HCT116 (cell line): ENCODE measurements at regions of chr2 and their contacts with region 1.

Region 1: GRCh38 chr2:110677530-110678456 is at the start of gene BUB1:
- DNase-seq: peak; percentile 91
- ATAC-seq: peak; percentile 94
- H3K4me3 ChIP-seq: peak within 1 kb of the TSS; percentile 68 to 98
- H3K27ac ChIP-seq: peak within 1 kb of the TSS; percentile 68
- H3K4me1 ChIP-seq: peaks cover 24 to 34% of the 10 kb centered on the region in 2 experiments
- H3K27me3 ChIP-seq: no peaks in the 10 kb centered on the region
- CTCF ChIP-seq: no peak
- POLR2A ChIP-seq: peak; percentile 95
- RAD21 ChIP-seq: no peak
- total RNA-seq, gene BUB1: 80.2 TPM

Region 2: GRCh38 chr2:110732422-110733413 is 54.9 kb after region 1 on chr2 and contains the start of gene ACOXL:
- CTCF ChIA-PET with region 1: no interaction called
- POLR2A ChIA-PET with region 1: no interaction called
- RAD21 ChIA-PET with region 1: no interaction called
- intact Hi-C with region 1: loop called (anchors 5 kb)
- DNase-seq: peak; percentile 40
- ATAC-seq: peak; percentile 89
- H3K4me3 ChIP-seq: peak within 1 kb of the TSS; percentile 55 to 66
- H3K27ac ChIP-seq: peak within 1 kb of the TSS; percentile 42; the same call in 1 of the 2 replicates
- H3K4me1 ChIP-seq: peaks cover 10 to 28% of the 10 kb centered on the region in 2 experiments; a peak in 2 of 4 replicates
- H3K27me3 ChIP-seq: no peaks in the 10 kb centered on the region
- CTCF ChIP-seq: no peak
- POLR2A ChIP-seq: peak; percentile 49
- RAD21 ChIP-seq: no peak
- total RNA-seq, gene ACOXL: 5.5 TPM